ENCODE measurements at regions of chr3 and their contacts with region 1.

Region 1: GRCh38 chr3:186849374-186849975 is 7.0 kb downstream of the ADIPOQ start:
- DNase-seq: no peak
- H3K4me3 Mint-ChIP-seq: no peak overlapping the region
- H3K27ac Mint-ChIP-seq: no peak overlapping the region
- H3K4me1 Mint-ChIP-seq: peaks cover 14% of the 10 kb centered on the region
- H3K27me3 Mint-ChIP-seq: peaks cover 20% of the 10 kb centered on the region

Region 2: GRCh38 chr3:187025656-187026316 is 176.3 kb after region 1 on chr3:
- CTCF ChIA-PET with region 1: interaction called, 11 read pairs
- DNase-seq: peak; percentile 55
- H3K4me3 Mint-ChIP-seq: peak overlapping the region; percentile 85
- H3K27ac Mint-ChIP-seq: peak overlapping the region; percentile 96
- H3K4me1 Mint-ChIP-seq: peaks cover 69% of the 10 kb centered on the region
- H3K27me3 Mint-ChIP-seq: no peaks in the 10 kb centered on the region

Region 3: DNA sequence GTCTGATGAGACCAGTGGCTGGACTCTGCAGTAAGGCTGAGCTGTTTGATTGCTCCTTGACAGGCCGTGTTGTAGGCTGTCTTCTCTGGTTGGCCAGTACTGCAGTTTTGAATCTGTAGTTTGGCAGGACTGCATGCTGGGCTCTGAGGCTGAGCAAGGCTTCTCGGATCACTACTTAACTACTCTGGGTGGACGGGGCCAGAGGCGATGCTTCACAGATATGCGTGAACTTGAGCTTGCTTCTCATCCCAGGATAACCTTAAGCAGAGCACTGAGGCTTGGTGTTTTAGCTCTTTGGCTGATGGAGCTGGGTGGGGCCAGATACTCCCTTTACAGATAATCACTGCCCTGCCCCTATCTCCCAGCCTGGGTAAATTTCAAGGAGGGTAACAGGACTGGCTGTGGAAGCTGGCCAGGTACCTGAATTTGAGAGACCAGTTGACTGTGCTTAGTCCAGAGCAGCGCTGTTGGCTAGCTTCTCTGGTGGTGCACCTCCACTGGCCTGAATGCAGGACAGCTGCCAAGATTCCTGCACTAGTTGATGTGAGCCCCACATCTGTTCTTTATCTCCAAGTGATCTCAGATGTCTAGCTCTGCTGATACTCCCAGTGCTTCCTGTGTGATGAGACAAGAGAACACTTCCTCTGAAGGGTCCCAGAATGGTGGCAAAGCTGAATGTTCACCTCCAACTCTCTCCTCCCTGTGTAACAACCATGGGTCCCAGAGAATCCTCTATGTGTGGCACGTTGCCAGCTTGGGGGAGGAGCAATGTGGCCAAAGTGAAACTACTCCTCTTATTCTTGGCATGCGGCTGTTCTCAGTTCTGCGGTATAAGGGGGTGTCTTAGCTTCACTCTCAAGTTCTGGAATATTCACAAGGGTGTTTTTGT is 252.0 kb after region 1 on chr3:
- CTCF ChIA-PET with region 1: interaction called, 11 read pairs
- DNase-seq: peak; percentile 69
- H3K4me3 Mint-ChIP-seq: peak overlapping the region; percentile 19
- H3K27ac Mint-ChIP-seq: peak overlapping the region; percentile 0
- H3K4me1 Mint-ChIP-seq: peaks cover 29% of the 10 kb centered on the region
- H3K27me3 Mint-ChIP-seq: peaks cover 3% of the 10 kb centered on the region

Region 4: DNA sequence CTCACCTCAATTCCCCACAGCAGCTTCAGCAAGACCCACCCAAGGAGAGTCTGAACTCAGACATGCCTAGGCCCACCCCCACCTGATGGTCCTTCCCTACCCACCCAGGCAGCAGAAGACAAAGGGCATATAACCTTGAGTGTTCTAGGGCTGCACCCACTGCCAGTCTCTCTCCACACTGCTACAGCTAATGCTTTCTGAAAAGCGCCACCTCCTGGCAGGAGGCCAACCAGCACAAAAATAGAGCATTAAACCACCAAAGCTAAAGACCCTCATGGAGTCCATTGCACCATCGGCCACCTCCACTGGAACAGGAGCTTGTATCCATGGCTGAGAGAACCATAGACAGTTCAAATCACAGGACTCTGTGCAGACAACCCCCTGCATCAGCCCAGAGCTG is 301.1 kb after region 1 on chr3:
- CTCF ChIA-PET with region 1: interaction called, 21 read pairs
- DNase-seq: peak; percentile 73
- H3K4me3 Mint-ChIP-seq: no peak overlapping the region
- H3K27ac Mint-ChIP-seq: no peak overlapping the region
- H3K4me1 Mint-ChIP-seq: peaks cover 6% of the 10 kb centered on the region
- H3K27me3 Mint-ChIP-seq: peaks cover 57% of the 10 kb centered on the region